Panc1 (cell line): ENCODE measurements at regions of chrX and their contacts with region 1.

Region 1: GRCh38 chrX:46844913-46845312 is 8.1 kb downstream of the RP2 start:
- DNase-seq: no peak
- ATAC-seq: no peak
- H3K4me3 ChIP-seq: no peak overlapping the region
- H3K27ac ChIP-seq: no peak overlapping the region
- H3K4me1 ChIP-seq: no peaks in the 10 kb centered on the region
- H3K27me3 ChIP-seq: no peaks in the 10 kb centered on the region
- CTCF ChIP-seq: no peak

Region 2: DNA sequence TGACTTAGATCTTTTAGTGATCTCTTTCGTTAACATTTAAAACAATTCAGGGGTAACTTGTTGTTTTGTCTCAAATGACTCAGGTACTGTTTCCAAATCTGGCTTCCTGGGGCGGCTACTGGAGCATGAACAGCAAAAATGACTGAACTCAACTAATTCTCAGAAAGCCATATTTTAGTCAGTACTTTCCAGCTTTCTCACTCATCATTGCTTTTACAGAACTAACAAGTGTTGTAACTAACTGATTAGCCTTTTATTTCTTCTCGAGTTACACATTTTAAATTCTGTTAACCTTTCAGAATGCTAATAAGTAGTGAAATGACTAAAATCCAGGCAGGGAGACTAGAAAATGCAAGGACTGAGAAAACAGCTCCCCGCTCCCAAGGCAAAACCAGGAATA is 122.6 kb after region 1 on chrX:
- CTCF ChIA-PET with region 1: no interaction called
- POLR2A ChIA-PET with region 1: no interaction called
- in situ Hi-C with region 1: no loop called
- intact Hi-C with region 1: no loop called
- DNase-seq: no peak
- ATAC-seq: no peak
- H3K4me3 ChIP-seq: no peak overlapping the region
- H3K27ac ChIP-seq: no peak overlapping the region
- H3K4me1 ChIP-seq: no peaks in the 10 kb centered on the region; the same call in 1 of the 2 replicates
- H3K27me3 ChIP-seq: no peaks in the 10 kb centered on the region
- CTCF ChIP-seq: no peak

Region 3: DNA sequence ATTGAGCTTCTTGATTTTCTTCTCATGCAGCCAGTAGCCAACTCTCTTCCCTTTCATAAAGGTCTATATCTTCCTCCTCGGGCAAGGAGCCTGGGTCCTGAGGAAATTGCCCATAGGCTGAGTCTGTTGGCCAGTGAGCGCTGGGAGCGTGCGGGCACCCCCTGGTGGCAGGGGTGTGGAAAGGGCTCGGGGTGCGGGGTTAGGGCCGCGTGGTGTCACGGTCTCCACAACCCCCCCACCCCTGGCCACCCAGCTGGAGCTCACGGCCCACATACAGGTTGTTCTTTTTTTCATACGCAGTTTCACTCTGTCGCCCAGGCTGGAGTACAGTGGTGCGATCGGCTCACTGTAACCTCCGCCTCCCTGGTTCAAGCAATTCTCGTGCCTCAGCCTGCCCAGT is 313.2 kb after region 1 on chrX:
- CTCF ChIA-PET with region 1: no interaction called
- POLR2A ChIA-PET with region 1: interaction called, 23 read pairs
- in situ Hi-C with region 1: no loop called
- intact Hi-C with region 1: no loop called
- DNase-seq: no peak
- ATAC-seq: no peak; the same call in 1 of the 2 replicates
- H3K4me3 ChIP-seq: no peak overlapping the region
- H3K27ac ChIP-seq: no peak overlapping the region
- H3K4me1 ChIP-seq: no peaks in the 10 kb centered on the region
- H3K27me3 ChIP-seq: no peaks in the 10 kb centered on the region
- CTCF ChIP-seq: no peak